CD8-positive, alpha-beta T cell (primary cell): ENCODE measurements at regions of chr7 and their contacts with region 1.

Region 1: GRCh38 chr7:25098096-25099046 is 26.7 kb downstream of the CYCS start:
- DNase-seq: peak; percentile 20 to 81 (median 57)
- ATAC-seq: peak; percentile 85
- H3K4me3 ChIP-seq: no peak overlapping the region
- H3K4me3 Mint-ChIP-seq: no peak overlapping the region
- H3K27ac ChIP-seq: no peak overlapping the region
- H3K27ac Mint-ChIP-seq: no peak overlapping the region
- H3K4me1 ChIP-seq: peaks cover 3% of the 10 kb centered on the region
- H3K4me1 Mint-ChIP-seq: peaks cover 4% of the 10 kb centered on the region
- H3K27me3 ChIP-seq: no peaks in the 10 kb centered on the region
- H3K27me3 Mint-ChIP-seq: peaks cover 2% of the 10 kb centered on the region
- CTCF ChIP-seq: peak; percentile 85

Region 2: DNA sequence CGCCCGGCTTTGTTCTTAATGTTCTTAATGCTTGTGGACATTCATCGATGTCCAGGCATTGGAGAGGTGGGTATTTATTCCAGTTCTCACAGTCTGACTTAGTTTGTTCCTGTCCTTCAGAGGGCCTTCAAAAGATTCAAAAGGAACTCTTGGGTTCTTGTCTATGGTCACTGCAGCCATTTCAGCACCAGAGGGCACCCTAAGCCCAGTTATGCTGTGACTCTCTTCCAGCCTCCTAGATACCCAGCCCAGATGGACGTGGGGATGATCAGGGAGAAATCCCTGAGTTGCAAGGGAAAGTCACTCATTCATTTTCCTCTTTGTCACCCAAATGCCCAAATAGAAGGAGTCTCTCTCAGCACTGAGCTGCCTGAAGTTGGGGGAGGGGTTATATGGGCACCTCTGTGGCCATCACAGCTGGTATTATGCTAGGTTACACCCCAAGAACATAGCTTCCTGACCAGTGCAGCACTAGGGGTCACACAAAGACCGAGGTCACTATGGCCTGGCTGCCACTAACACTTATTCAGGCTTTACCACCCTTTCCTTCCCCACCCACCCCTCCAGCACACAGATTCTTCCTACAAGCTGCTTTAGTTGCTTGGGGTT is 1527.7 kb before region 1 on chr7:
- CTCF ChIA-PET with region 1: interaction called, 3 read pairs
- POLR2A ChIA-PET with region 1: no interaction called
- intact Hi-C with region 1: loop called (anchors 2 kb)
- DNase-seq: peak; percentile 40 to 81 (median 66)
- ATAC-seq: peak; percentile 83
- H3K4me3 ChIP-seq: no peak overlapping the region
- H3K4me3 Mint-ChIP-seq: no peak overlapping the region
- H3K27ac ChIP-seq: no peak overlapping the region
- H3K27ac Mint-ChIP-seq: no peak overlapping the region
- H3K4me1 ChIP-seq: no peaks in the 10 kb centered on the region
- H3K4me1 Mint-ChIP-seq: no peaks in the 10 kb centered on the region
- H3K27me3 ChIP-seq: no peaks in the 10 kb centered on the region
- H3K27me3 Mint-ChIP-seq: peaks cover 16% of the 10 kb centered on the region
- CTCF ChIP-seq: peak; percentile 67

Region 3: DNA sequence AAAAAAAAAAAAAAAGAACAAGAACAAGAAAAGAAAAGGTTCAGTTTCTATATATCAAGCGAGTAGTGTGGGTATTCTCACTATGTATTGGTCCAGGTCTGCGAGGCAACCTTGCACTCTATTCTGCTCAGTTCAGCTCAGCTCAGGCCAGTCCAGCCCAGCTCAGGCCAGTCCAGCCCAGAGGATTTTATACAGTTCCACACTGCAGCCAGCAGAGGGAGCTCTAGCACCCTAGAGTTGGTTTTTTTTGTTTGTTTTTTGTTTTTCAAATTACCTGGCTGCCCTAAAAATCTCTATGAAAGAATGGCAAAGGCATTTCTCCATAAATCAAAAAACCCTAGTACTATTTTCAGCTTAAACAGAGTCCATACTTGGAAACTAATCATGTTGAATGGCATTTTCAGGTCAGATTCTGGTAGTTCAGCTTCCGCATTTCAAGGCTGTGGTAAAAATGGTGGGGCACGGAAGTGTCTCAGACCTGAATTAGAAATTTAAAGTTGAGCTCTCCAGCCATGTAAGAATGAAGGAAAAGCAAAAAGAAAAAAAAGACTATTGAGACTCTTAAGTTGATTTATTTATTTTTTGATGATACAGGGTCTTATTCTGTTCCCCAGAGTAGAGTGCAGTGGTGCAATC is 285.9 kb before region 1 on chr7:
- CTCF ChIA-PET with region 1: interaction called, 170 read pairs
- POLR2A ChIA-PET with region 1: no interaction called
- intact Hi-C with region 1: loop called (anchors 1 kb)
- DNase-seq: peak in 7 of 9 experiments; percentile 33 to 67 (median 52)
- ATAC-seq: peak; percentile 66
- H3K4me3 ChIP-seq: no peak overlapping the region
- H3K4me3 Mint-ChIP-seq: no peak overlapping the region
- H3K27ac ChIP-seq: no peak overlapping the region
- H3K27ac Mint-ChIP-seq: no peak overlapping the region
- H3K4me1 ChIP-seq: no peaks in the 10 kb centered on the region
- H3K4me1 Mint-ChIP-seq: no peaks in the 10 kb centered on the region
- H3K27me3 ChIP-seq: no peaks in the 10 kb centered on the region
- H3K27me3 Mint-ChIP-seq: no peaks in the 10 kb centered on the region
- CTCF ChIP-seq: peak; percentile 90

Region 4: GRCh38 chr7:25069900-25070443 is 28.4 kb before region 1 on chr7:
- CTCF ChIA-PET with region 1: interaction called, 71 read pairs
- POLR2A ChIA-PET with region 1: no interaction called
- intact Hi-C with region 1: loop called in 1 of 2 experiments (anchors 2 kb)
- DNase-seq: peak in 8 of 9 experiments; percentile 7 to 80 (median 47)
- ATAC-seq: peak; percentile 57
- H3K4me3 ChIP-seq: no peak overlapping the region
- H3K4me3 Mint-ChIP-seq: no peak overlapping the region
- H3K27ac ChIP-seq: no peak overlapping the region
- H3K27ac Mint-ChIP-seq: no peak overlapping the region
- H3K4me1 ChIP-seq: no peaks in the 10 kb centered on the region
- H3K4me1 Mint-ChIP-seq: no peaks in the 10 kb centered on the region
- H3K27me3 ChIP-seq: no peaks in the 10 kb centered on the region
- H3K27me3 Mint-ChIP-seq: no peaks in the 10 kb centered on the region
- CTCF ChIP-seq: peak; percentile 88

Region 5: DNA sequence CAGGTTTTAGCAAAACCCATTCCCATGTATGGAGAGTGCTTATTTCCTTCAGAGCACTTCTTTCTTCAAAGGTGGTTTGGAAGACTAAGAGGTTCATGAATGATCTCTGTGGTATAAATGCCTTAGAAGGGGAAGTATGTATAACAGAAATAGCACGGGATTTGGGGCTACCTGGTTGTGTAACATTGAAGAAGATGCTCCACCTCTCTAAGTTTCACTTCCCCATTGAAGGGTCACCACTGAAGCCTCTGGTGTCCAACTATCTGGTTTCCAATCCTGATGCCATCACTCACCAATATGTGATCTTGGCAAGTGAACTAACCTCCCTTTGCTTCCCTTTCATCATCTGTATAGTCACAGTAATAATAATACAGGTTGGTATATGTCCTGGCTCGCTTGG is 10.5 kb before region 1 on chr7:
- CTCF ChIA-PET with region 1: interaction called, 23 read pairs
- POLR2A ChIA-PET with region 1: no interaction called
- intact Hi-C with region 1: no loop called
- DNase-seq: no peak
- ATAC-seq: no peak
- H3K4me3 ChIP-seq: no peak overlapping the region
- H3K4me3 Mint-ChIP-seq: no peak overlapping the region
- H3K27ac ChIP-seq: no peak overlapping the region
- H3K27ac Mint-ChIP-seq: no peak overlapping the region
- H3K4me1 ChIP-seq: no peaks in the 10 kb centered on the region
- H3K4me1 Mint-ChIP-seq: no peaks in the 10 kb centered on the region
- H3K27me3 ChIP-seq: peaks cover 0 to 2% of the 10 kb centered on the region in 2 experiments
- H3K27me3 Mint-ChIP-seq: peaks cover 8% of the 10 kb centered on the region
- CTCF ChIP-seq: no peak

Region 6: GRCh38 chr7:25117226-25118047 is 19.1 kb after region 1 on chr7:
- CTCF ChIA-PET with region 1: interaction called, 10 read pairs
- POLR2A ChIA-PET with region 1: interaction called, 3 read pairs
- intact Hi-C with region 1: no loop called
- DNase-seq: peak in 2 of 9 experiments; percentile 30 to 59
- ATAC-seq: peak; percentile 54
- H3K4me3 ChIP-seq: no peak overlapping the region
- H3K4me3 Mint-ChIP-seq: peak overlapping the region; percentile 29
- H3K27ac ChIP-seq: peak overlapping the region; percentile 10 to 78
- H3K27ac Mint-ChIP-seq: peak overlapping the region; percentile 75
- H3K4me1 ChIP-seq: no peaks in the 10 kb centered on the region
- H3K4me1 Mint-ChIP-seq: peaks cover 27% of the 10 kb centered on the region
- H3K27me3 ChIP-seq: no peaks in the 10 kb centered on the region
- H3K27me3 Mint-ChIP-seq: no peaks in the 10 kb centered on the region
- CTCF ChIP-seq: no peak

Region 7: GRCh38 chr7:25877802-25878789 is 779.7 kb after region 1 on chr7:
- CTCF ChIA-PET with region 1: no interaction called
- POLR2A ChIA-PET with region 1: no interaction called
- intact Hi-C with region 1: no loop called
- DNase-seq: no peak
- ATAC-seq: no peak
- H3K4me3 ChIP-seq: no peak overlapping the region
- H3K4me3 Mint-ChIP-seq: no peak overlapping the region
- H3K27ac ChIP-seq: no peak overlapping the region
- H3K27ac Mint-ChIP-seq: no peak overlapping the region
- H3K4me1 ChIP-seq: no peaks in the 10 kb centered on the region
- H3K4me1 Mint-ChIP-seq: no peaks in the 10 kb centered on the region
- H3K27me3 ChIP-seq: peaks cover 0 to 6% of the 10 kb centered on the region in 2 experiments
- H3K27me3 Mint-ChIP-seq: peaks cover 53% of the 10 kb centered on the region
- CTCF ChIP-seq: no peak